CD8-positive, alpha-beta T cell (primary cell): ENCODE measurements at regions of chr1 and their contacts with region 1.

Region 1: DNA sequence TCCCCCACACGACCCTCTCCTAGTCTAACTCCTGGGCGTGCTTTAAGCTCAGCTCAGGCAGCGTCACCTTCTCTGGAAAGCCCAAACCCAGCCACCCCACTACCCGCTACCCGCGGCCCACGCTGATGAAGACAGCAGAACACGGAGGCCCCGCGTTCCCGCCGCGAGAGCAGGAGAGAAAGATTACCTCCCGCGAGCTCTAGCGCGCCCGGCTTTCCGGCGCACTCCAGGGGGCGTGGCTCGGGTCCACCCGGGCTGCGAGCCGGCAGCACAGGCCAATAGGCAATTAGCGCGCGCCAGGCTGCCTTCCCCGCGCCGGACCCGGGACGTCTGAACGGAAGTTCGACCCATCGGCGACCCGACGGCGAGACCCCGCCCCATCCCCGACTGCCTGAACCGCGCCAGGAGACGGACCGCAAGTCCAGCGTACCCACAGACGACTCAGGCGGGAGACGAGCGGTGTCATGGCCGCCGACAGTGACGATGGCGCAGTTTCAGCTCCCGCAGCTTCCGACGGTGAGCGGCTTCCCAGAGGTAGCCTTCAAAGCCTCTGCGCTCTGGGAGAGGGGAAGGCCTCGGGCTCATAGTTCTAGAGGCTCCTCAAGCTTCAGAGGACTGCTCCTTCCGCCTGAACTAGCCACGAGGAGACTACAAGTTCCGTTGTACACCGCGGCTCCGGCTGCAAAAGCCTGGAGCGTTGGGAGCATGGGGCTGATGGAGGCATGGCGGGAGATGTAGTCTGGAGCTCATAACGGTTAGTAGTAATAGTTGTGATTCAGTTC is at the starts of genes MUTYH and TOE1:
- DNase-seq: peak; percentile 79 to 94 (median 89)
- ATAC-seq: peak; percentile 81
- H3K4me3 ChIP-seq: peak within 1 kb of the TSS; percentile 88 to 94
- H3K4me3 Mint-ChIP-seq: peak within 1 kb of the TSS; percentile 98
- H3K27ac ChIP-seq: peak within 1 kb of the TSS; percentile 97 to 99
- H3K27ac Mint-ChIP-seq: peak within 1 kb of the TSS; percentile 97
- H3K4me1 ChIP-seq: peaks cover 35% of the 10 kb centered on the region
- H3K4me1 Mint-ChIP-seq: peaks cover 50% of the 10 kb centered on the region
- H3K27me3 ChIP-seq: no peaks in the 10 kb centered on the region
- H3K27me3 Mint-ChIP-seq: no peaks in the 10 kb centered on the region
- CTCF ChIP-seq: no peak
- total RNA-seq, gene MUTYH: 53.0 to 62.5 TPM
- total RNA-seq, gene TOE1: 53.8 to 56.5 TPM

Region 2: DNA sequence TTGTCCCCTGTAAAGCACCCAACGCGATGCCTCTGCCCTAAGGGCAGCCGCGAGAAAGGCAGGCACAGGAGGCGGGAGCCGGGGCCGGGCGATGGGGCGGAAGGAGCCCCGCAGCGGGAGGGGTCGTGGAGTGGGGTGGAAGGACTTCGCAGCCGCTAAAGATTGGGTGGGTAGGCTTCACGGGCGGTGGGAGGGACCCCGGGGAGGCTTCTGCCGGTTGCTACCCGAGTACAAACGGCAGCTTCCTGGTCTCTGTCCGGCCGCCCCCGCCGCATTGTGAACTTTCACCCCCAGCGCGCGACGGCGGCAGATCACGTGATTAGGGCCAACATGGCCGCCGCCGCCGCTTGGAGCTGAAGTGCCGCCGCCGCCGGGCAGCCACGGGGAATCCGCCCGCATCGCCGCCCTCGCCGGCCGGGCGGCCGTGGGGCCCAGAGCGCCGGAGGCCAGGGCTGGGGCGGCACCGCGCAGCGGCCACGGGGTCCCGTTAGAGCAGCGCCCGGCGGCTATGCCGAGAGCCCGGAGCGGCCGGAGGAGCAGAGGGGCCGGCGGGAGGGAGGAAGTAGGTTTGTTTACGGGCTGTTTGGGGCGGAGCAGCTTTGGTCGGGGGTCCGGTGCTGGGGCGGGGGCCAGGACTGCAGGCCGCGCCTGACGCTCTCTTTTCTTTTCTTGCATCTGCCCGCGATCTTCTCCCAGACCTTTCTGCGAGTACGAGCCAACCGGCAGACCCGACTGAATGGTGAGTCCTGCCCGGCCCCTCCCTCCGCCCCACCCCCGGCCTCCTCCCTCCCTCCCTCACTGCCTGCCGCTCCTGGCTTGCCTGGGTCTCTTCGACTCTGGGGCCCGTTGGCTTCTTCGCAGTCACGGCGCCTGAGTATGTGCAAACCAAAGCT is 708.1 kb before region 1 on chr1:
- CTCF ChIA-PET with region 1: no interaction called
- POLR2A ChIA-PET with region 1: interaction called, 10 read pairs
- intact Hi-C with region 1: no loop called
- DNase-seq: peak; percentile 73 to 95 (median 88)
- ATAC-seq: peak; percentile 75
- H3K4me3 ChIP-seq: peak overlapping the region; percentile 55 to 82
- H3K4me3 Mint-ChIP-seq: peak overlapping the region; percentile 90
- H3K27ac ChIP-seq: peak overlapping the region; percentile 86 to 97
- H3K27ac Mint-ChIP-seq: peak overlapping the region; percentile 98
- H3K4me1 ChIP-seq: peaks cover 20% of the 10 kb centered on the region
- H3K4me1 Mint-ChIP-seq: peaks cover 48% of the 10 kb centered on the region
- H3K27me3 ChIP-seq: no peaks in the 10 kb centered on the region
- H3K27me3 Mint-ChIP-seq: no peaks in the 10 kb centered on the region
- CTCF ChIP-seq: no peak

Region 3: DNA sequence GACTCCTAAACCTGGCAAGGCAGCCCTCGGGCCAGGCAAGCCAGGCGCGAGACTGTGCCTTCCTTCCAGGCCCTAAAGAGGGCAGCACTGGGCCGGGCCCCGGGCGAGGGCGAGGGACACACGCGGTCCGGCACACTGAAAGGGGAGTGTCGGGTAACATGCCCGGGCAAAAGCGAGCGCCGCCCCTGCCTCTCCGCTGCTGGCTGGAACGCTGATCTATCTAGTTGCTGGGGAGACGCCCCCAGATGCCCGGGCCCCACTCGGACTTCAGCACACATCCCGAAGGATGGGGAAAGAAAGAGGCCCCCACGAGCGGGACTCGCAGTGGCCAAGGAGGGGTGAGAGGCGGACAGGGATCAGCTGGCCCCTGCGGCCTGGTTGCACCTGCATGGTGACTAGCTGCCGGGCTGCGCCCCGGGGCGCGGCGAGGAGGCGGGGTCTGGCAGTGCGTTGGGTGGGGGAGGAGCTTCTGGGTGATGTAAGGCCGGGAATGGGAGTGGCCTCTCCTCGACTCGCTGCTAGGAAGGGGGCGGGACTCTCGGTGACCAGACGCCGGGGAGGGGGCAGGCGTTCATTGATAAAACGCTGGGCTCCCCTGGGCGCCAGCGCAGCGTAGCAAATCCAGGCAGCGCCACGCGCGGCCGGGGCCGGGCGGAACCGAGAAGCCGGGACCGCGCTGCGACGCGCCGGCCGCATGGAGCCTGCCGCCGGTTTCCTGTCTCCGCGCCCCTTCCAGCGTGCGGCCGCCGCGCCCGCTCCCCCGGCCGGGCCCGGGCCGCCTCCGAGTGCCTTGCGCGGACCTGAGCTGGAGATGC is 540.0 kb before region 1 on chr1 and contains the start of gene PLK3:
- CTCF ChIA-PET with region 1: no interaction called
- POLR2A ChIA-PET with region 1: no interaction called
- intact Hi-C with region 1: loop called in 1 of 2 experiments (anchors 2 kb)
- DNase-seq: peak; percentile 97 to 99 (median 98)
- ATAC-seq: peak; percentile 83
- H3K4me3 ChIP-seq: peak within 1 kb of the TSS; percentile 79 to 95
- H3K4me3 Mint-ChIP-seq: peak within 1 kb of the TSS; percentile 87
- H3K27ac ChIP-seq: peak within 1 kb of the TSS; percentile 91 to 98
- H3K27ac Mint-ChIP-seq: peak within 1 kb of the TSS; percentile 98
- H3K4me1 ChIP-seq: peaks cover 29% of the 10 kb centered on the region
- H3K4me1 Mint-ChIP-seq: peaks cover 37% of the 10 kb centered on the region
- H3K27me3 ChIP-seq: no peaks in the 10 kb centered on the region
- H3K27me3 Mint-ChIP-seq: no peaks in the 10 kb centered on the region
- CTCF ChIP-seq: peak; percentile 81
- total RNA-seq, gene PLK3: 568 to 599 TPM

Region 4: DNA sequence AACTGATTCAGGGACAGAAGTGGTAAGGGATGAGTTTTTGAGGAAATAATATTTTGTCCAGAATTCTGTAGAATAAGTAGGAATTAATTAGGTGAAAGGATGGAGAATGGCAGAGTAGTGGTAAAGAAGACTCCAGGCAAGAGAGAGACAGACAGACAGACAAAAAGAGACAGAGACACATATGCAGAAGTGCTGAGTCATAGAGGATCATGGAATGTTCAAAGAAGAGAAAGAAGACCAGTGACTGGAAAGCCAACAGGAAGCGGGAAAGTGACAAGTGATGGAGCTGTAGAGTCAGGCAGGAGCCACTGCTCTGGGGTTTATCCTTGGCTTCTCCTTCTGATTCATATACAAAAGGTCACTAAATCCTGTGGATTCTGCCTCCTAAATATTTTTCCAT is 242.0 kb before region 1 on chr1:
- CTCF ChIA-PET with region 1: no interaction called
- POLR2A ChIA-PET with region 1: no interaction called
- intact Hi-C with region 1: no loop called
- DNase-seq: no peak
- ATAC-seq: no peak
- H3K4me3 ChIP-seq: no peak overlapping the region
- H3K4me3 Mint-ChIP-seq: no peak overlapping the region
- H3K27ac ChIP-seq: no peak overlapping the region
- H3K27ac Mint-ChIP-seq: no peak overlapping the region
- H3K4me1 ChIP-seq: no peaks in the 10 kb centered on the region
- H3K4me1 Mint-ChIP-seq: no peaks in the 10 kb centered on the region
- H3K27me3 ChIP-seq: no peaks in the 10 kb centered on the region
- H3K27me3 Mint-ChIP-seq: peaks cover 2% of the 10 kb centered on the region
- CTCF ChIP-seq: no peak

Region 5: DNA sequence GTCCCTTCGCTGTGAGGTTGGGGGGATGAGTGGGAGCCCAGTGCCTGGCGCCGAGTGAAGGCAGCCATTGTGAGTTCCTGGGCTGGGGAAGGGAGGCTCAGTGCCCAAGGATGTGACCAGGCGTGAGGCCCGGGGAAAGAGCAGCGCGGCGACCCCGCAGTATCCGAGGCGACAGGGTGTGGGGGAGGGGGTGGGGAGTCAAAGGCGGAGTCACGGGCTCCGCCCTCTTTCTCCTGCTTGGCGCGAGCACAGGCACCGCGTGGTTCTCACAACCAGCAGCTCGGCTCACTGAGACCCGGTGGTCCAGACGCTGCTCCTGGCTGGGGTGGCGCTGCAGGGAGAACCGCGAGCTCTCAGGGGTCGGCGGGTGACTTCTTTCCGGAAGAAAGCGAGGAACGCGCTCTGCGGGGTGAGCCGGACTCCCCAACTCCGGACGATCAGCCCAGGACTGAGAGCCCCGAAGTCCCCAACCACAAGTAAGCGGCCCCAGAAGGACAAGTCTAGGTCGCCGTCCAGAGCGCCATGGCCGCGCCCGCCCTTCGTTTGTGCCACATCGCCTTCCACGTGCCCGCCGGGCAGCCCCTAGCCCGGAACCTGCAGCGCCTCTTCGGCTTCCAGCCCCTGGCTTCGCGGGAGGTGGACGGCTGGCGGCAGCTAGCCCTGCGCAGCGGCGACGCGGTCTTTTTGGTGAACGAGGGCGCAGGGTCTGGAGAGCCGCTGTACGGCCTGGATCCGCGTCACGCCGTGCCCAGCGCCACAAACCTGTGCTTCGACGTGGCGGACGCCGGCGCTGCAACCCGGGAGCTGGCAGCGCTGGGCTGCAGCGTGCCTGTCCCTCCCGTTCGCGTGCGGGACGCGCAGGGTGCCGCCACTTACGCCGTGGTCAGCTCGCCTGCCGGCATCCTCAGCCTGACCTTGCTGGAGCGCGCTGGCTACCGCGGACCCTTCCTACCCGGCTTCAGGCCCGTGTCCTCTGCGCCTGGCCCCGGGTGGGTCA is 13.1 kb before region 1 on chr1 and contains the start of gene HPDL:
- CTCF ChIA-PET with region 1: interaction called, 9 read pairs
- POLR2A ChIA-PET with region 1: interaction called, 53 read pairs
- intact Hi-C with region 1: loop called in 1 of 2 experiments (anchors 1 kb)
- DNase-seq: peak in 8 of 9 experiments; percentile 33 to 76 (median 62)
- ATAC-seq: peak; percentile 82
- H3K4me3 ChIP-seq: peak within 1 kb of the TSS; percentile 70 to 84
- H3K4me3 Mint-ChIP-seq: peak within 1 kb of the TSS; percentile 82
- H3K27ac ChIP-seq: peak within 1 kb of the TSS in 1 of 2 experiments; percentile 8
- H3K27ac Mint-ChIP-seq: peak within 1 kb of the TSS; percentile 32
- H3K4me1 ChIP-seq: peaks cover 15% of the 10 kb centered on the region
- H3K4me1 Mint-ChIP-seq: peaks cover 17% of the 10 kb centered on the region
- H3K27me3 ChIP-seq: no peaks in the 10 kb centered on the region
- H3K27me3 Mint-ChIP-seq: no peaks in the 10 kb centered on the region
- CTCF ChIP-seq: no peak
- total RNA-seq, gene HPDL: 0.43 to 0.47 TPM

Region 6: DNA sequence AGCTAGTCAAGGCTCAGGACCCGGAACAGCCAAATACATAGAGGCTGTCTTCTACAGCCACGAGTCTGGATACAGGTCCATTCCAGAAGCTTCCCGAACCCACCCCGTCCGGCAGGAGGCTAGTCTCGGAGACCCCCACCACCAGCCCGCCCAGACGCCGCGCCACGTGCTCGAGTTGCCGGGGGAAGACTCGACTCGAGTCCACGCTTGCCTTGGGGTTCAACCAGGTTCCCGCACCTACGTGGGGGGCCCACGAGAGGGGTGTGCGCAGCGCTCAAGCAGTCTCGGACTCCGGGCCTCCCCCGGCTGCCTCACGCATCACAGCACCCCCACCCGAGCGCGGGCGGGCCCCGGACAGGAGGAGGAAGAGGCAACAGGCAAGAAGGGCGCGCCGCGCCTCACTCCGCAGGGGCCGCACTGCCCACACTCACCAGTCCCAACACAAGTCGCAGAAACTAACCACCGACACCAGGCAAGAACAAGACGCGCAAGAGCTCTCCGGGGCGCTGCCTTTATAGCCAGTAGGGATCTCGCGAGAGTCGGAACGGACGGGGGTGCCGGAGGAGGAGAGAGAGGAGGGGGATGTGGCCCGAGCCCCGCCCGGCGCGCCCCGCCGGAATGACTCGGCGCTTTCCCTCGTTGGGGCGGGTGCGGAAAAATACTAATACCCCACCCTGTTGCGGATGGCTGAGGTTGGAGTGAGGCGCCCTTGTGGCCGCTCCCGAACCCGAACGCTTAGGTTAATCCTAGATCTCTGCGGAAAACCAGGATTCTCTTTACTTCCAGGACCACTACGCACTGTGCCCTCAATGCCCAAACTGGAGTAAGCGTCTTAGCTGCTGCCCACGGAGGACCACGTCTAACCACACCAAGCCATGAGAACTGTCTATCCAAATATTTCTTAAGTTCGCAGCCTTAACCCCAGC is 181.7 kb after region 1 on chr1 and contains the start of gene PRDX1:
- CTCF ChIA-PET with region 1: no interaction called
- POLR2A ChIA-PET with region 1: interaction called, 10 read pairs
- intact Hi-C with region 1: no loop called
- DNase-seq: peak; percentile 90 to 98 (median 93)
- ATAC-seq: peak; percentile 90
- H3K4me3 ChIP-seq: peak within 1 kb of the TSS; percentile 86 to 99
- H3K4me3 Mint-ChIP-seq: peak within 1 kb of the TSS; percentile 94
- H3K27ac ChIP-seq: peak within 1 kb of the TSS; percentile 75 to 78
- H3K27ac Mint-ChIP-seq: peak within 1 kb of the TSS; percentile 90
- H3K4me1 ChIP-seq: peaks cover 15% of the 10 kb centered on the region
- H3K4me1 Mint-ChIP-seq: peaks cover 26% of the 10 kb centered on the region
- H3K27me3 ChIP-seq: peaks cover 0 to 3% of the 10 kb centered on the region in 2 experiments
- H3K27me3 Mint-ChIP-seq: no peaks in the 10 kb centered on the region
- CTCF ChIP-seq: no peak
- total RNA-seq, gene PRDX1: 20.4 to 27.0 TPM

Region 7: DNA sequence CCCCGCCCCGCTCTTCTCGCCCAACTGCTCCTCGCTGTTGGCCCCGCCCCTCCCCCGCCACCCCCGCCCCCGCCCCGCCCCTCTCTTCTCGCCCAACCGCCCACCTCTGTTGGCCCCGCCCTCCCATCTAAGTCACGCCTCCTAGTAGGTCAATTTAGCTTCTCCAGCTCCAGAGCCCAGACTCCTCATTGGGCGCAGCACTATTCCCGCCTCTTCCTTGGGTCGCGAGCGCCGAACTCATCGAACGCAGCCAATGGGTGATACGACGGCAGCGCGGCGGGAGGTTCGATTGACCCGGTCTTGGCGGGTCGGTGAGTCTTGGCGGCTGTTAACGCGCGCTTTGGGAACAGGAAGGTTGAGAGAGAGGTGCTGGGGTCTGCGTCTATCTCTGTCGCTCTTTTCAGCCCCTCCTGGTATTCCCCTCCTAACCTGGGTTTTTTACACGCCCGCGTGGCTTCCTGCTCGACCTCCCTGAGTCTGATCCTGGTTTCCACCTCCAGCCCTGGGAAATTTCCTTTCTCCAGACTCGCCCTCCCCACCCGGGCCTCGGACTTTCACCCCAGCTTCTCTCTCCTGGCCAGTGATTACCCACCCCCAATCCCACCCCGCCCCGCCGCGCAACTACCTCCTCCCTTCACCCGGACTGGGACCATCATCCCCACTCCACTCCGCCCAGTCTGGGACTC is 907.6 kb after region 1 on chr1 and contains the start of gene RAD54L:
- CTCF ChIA-PET with region 1: no interaction called
- POLR2A ChIA-PET with region 1: no interaction called
- intact Hi-C with region 1: loop called in 1 of 2 experiments (anchors 5 kb)
- DNase-seq: peak; percentile 90 to 99 (median 95)
- ATAC-seq: peak; percentile 96
- H3K4me3 ChIP-seq: peak within 1 kb of the TSS; percentile 78 to 80
- H3K4me3 Mint-ChIP-seq: peak within 1 kb of the TSS; percentile 87
- H3K27ac ChIP-seq: peak within 1 kb of the TSS; percentile 43 to 64
- H3K27ac Mint-ChIP-seq: peak within 1 kb of the TSS; percentile 84
- H3K4me1 ChIP-seq: peaks cover 10% of the 10 kb centered on the region
- H3K4me1 Mint-ChIP-seq: peaks cover 16% of the 10 kb centered on the region
- H3K27me3 ChIP-seq: no peaks in the 10 kb centered on the region
- H3K27me3 Mint-ChIP-seq: no peaks in the 10 kb centered on the region
- CTCF ChIP-seq: no peak
- total RNA-seq, gene RAD54L: 0.56 to 1.4 TPM